ENCODE measurements at regions of chr15 and their contacts with region 1.

Region 1: GRCh38 chr15:57340682-57341259 is 35.5 kb upstream of the CGNL1 start:
- DNase-seq: peak; percentile 56
- H3K4me3 Mint-ChIP-seq: no peak overlapping the region
- H3K27ac Mint-ChIP-seq: no peak overlapping the region
- H3K4me1 Mint-ChIP-seq: no peaks in the 10 kb centered on the region
- H3K27me3 Mint-ChIP-seq: no peaks in the 10 kb centered on the region
- CTCF ChIP-seq: peak; percentile 94

Region 2: GRCh38 chr15:56491110-56491722 is 849.6 kb before region 1 on chr15:
- CTCF ChIA-PET with region 1: interaction called, 4 read pairs
- POLR2A ChIA-PET with region 1: no interaction called
- intact Hi-C with region 1: loop called (anchors 10 kb)
- DNase-seq: peak; percentile 72
- H3K4me3 Mint-ChIP-seq: no peak overlapping the region
- H3K27ac Mint-ChIP-seq: no peak overlapping the region
- H3K4me1 Mint-ChIP-seq: no peaks in the 10 kb centered on the region
- H3K27me3 Mint-ChIP-seq: no peaks in the 10 kb centered on the region
- CTCF ChIP-seq: peak; percentile 79

Region 3: DNA sequence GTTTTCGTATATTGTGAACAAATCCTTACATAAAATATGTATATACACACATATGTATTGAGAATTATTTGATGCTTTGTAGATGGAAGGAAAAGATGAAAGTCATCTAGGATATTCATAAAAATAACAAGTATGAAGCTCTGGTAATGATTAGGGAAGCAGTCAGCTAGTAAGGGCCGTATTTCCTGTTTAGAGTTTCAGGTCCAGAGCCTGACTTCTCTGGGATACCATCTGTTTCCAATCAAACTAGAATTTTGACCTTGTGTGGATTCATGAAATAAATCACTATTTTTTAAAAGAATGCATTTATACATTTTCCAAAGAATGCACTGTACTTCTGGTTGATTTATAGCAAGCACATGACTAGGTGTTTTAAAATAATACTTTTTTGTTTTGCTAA is 120.6 kb before region 1 on chr15:
- CTCF ChIA-PET with region 1: no interaction called
- POLR2A ChIA-PET with region 1: no interaction called
- intact Hi-C with region 1: no loop called
- DNase-seq: no peak
- H3K4me3 Mint-ChIP-seq: no peak overlapping the region
- H3K27ac Mint-ChIP-seq: no peak overlapping the region
- H3K4me1 Mint-ChIP-seq: peaks cover 10% of the 10 kb centered on the region
- H3K27me3 Mint-ChIP-seq: no peaks in the 10 kb centered on the region
- CTCF ChIP-seq: no peak

Region 4: DNA sequence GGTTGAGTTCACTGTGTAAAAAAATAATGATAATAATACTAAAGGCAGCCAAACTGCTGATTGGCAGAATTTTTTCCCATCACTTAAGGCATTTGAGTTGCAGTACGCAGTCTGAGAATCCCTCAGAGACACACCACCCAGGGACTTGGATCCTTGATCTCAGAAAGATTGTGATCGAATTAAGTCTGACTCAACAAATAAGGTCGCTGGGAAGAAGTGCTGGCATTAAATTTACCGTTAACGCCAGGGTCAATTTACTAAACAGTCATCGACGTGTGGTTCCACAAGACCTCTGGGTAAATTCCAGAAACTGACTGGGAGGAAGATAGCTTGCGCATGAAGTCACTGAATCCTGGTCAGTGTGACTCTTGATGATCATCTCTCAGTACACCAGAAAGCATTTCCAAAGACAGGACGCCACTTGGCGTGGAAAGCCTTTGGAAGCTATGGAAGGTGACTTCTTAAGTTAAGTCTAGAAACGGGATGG is 12.7 kb before region 1 on chr15:
- CTCF ChIA-PET with region 1: interaction called, 30 read pairs
- POLR2A ChIA-PET with region 1: no interaction called
- intact Hi-C with region 1: no loop called
- DNase-seq: no peak
- H3K4me3 Mint-ChIP-seq: no peak overlapping the region
- H3K27ac Mint-ChIP-seq: no peak overlapping the region
- H3K4me1 Mint-ChIP-seq: peaks cover 4% of the 10 kb centered on the region
- H3K27me3 Mint-ChIP-seq: peaks cover 24% of the 10 kb centered on the region
- CTCF ChIP-seq: no peak

Region 5: GRCh38 chr15:57462381-57462780 is 121.6 kb after region 1 on chr15:
- CTCF ChIA-PET with region 1: interaction called, 3 read pairs
- POLR2A ChIA-PET with region 1: no interaction called
- intact Hi-C with region 1: loop called (anchors 2 kb)
- DNase-seq: no peak
- H3K4me3 Mint-ChIP-seq: no peak overlapping the region
- H3K27ac Mint-ChIP-seq: no peak overlapping the region
- H3K4me1 Mint-ChIP-seq: no peaks in the 10 kb centered on the region
- H3K27me3 Mint-ChIP-seq: peaks cover 15% of the 10 kb centered on the region
- CTCF ChIP-seq: no peak

Region 6: GRCh38 chr15:57522148-57522547 is 181.4 kb after region 1 on chr15:
- CTCF ChIA-PET with region 1: interaction called, 400 read pairs
- POLR2A ChIA-PET with region 1: interaction called, 38 read pairs
- intact Hi-C with region 1: loop called (anchors 1 kb)
- DNase-seq: no peak
- H3K4me3 Mint-ChIP-seq: no peak overlapping the region
- H3K27ac Mint-ChIP-seq: no peak overlapping the region
- H3K4me1 Mint-ChIP-seq: no peaks in the 10 kb centered on the region
- H3K27me3 Mint-ChIP-seq: no peaks in the 10 kb centered on the region
- CTCF ChIP-seq: no peak

Region 7: DNA sequence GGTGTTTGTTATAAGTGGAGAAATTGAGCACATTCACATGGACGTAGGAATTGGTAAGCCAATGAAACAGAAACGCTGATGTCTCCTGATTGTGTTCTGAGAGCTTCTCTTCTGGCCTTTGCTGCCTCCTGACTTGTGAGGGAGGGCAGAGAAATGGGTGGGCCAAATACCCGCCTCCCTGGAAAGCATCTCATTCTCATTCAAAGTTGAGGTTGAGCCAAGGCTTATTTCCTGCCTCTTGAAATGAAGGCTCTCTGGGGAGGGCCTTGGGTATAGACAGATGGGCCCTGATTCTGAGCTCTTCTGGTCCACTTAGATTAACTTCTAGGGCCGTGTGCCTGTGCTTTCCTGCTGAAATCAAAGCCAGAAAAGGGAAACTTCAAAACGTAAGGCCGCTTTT is 193.5 kb after region 1 on chr15:
- CTCF ChIA-PET with region 1: interaction called, 400 read pairs
- POLR2A ChIA-PET with region 1: interaction called, 38 read pairs
- intact Hi-C with region 1: no loop called
- DNase-seq: no peak
- H3K4me3 Mint-ChIP-seq: no peak overlapping the region
- H3K27ac Mint-ChIP-seq: no peak overlapping the region
- H3K4me1 Mint-ChIP-seq: no peaks in the 10 kb centered on the region
- H3K27me3 Mint-ChIP-seq: peaks cover 15% of the 10 kb centered on the region
- CTCF ChIP-seq: no peak

Measured in MCF 10A (cell line).